Naive thymus-derived CD4-positive, alpha-beta T cell (primary cell): ENCODE measurements at regions of chr9 and their contacts with region 1.

Region 1: DNA sequence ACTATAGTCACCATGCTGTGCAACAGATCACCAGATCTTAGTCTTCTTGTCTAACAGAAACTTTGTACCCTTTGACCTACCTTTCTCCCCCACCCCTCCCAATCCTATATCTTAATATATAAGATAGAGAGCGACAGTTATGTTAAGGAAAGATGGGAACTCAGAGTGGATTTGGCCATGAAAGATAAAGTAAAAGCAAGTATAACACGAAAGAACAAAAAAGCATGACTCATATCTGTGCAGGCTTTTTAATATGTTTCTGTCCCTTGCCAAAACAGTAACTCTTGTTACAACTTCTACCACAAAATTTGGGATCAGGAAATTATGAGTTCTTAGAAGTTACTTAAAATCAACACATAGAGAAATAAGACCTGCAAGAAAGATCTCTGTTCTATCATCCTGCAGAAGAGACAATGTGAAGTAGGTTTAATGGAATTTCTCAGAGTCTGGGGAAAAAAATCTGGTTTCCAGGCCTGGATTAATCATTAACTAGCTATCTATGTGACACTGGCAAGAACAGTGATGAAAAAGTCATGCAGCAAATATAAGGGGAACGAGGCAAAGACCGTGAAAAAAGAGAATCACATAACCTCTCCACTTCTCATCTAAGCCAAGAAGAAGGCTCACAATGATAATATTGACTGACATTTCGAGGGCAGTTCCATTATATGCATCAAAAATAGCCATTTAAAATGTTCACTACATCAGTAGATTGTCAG is 18.6 kb downstream of the BAAT start:
- DNase-seq: no peak
- ATAC-seq: no peak
- H3K4me3 ChIP-seq: no peak overlapping the region
- H3K4me3 Mint-ChIP-seq: no peak overlapping the region
- H3K27ac ChIP-seq: no peak overlapping the region
- H3K27ac Mint-ChIP-seq: no peak overlapping the region
- H3K4me1 ChIP-seq: no peaks in the 10 kb centered on the region
- H3K4me1 Mint-ChIP-seq: no peaks in the 10 kb centered on the region
- H3K27me3 ChIP-seq: no peaks in the 10 kb centered on the region
- H3K27me3 Mint-ChIP-seq: peaks cover 0 to 9% (median 6%) of the 10 kb centered on the region in 5 donors

Region 2: GRCh38 chr9:101005248-101005647 is 360.9 kb before region 1 on chr9:
- CTCF ChIA-PET with region 1: no interaction called
- POLR2A ChIA-PET with region 1: no interaction called
- intact Hi-C with region 1: no loop called
- DNase-seq: no peak
- ATAC-seq: no peak
- H3K4me3 ChIP-seq: no peak overlapping the region
- H3K4me3 Mint-ChIP-seq: no peak overlapping the region
- H3K27ac ChIP-seq: no peak overlapping the region
- H3K27ac Mint-ChIP-seq: no peak overlapping the region
- H3K4me1 ChIP-seq: no peaks in the 10 kb centered on the region
- H3K4me1 Mint-ChIP-seq: no peaks in the 10 kb centered on the region
- H3K27me3 ChIP-seq: no peaks in the 10 kb centered on the region
- H3K27me3 Mint-ChIP-seq: no peaks in the 10 kb centered on the region

Region 3: GRCh38 chr9:101176384-101176783 is 189.8 kb before region 1 on chr9:
- CTCF ChIA-PET with region 1: no interaction called
- POLR2A ChIA-PET with region 1: no interaction called
- intact Hi-C with region 1: loop called in 1 of 2 experiments (anchors 5 kb)
- DNase-seq: no peak
- ATAC-seq: no peak
- H3K4me3 ChIP-seq: no peak overlapping the region
- H3K4me3 Mint-ChIP-seq: no peak overlapping the region
- H3K27ac ChIP-seq: no peak overlapping the region
- H3K27ac Mint-ChIP-seq: no peak overlapping the region
- H3K4me1 ChIP-seq: no peaks in the 10 kb centered on the region
- H3K4me1 Mint-ChIP-seq: no peaks in the 10 kb centered on the region
- H3K27me3 ChIP-seq: no peaks in the 10 kb centered on the region
- H3K27me3 Mint-ChIP-seq: peaks cover 0 to 9% (median 0%) of the 10 kb centered on the region in 5 donors

Region 4: DNA sequence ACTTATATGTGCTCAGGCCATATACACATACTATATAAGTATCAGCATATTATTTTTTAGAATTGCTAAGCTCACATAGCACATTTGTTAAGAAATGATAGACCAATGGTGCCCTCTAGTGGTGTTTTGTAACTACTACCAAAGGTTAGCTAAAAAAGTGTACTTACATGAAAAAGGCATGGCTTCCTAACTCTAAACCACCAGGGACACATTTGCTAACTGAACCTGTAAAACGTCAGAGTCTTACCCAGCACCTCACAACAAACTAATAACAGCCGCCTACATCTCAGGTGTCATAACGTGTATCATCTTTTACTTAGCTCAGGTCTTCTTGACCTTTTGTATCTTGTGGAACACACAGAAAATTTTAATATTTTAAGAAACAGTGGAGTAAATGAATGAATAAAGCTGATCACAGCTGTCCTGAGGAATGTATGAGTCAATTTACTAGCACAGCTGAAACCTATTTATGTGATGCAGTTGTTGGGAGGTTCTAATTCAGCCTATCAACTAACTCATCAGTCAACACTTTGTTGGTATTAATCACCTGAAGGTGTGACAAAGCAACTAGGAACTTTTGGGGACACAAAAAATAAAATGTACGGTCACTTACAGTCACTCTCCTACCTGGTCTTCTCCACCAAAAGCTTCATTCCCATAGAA is 54.3 kb before region 1 on chr9:
- CTCF ChIA-PET with region 1: no interaction called
- POLR2A ChIA-PET with region 1: no interaction called
- intact Hi-C with region 1: no loop called
- DNase-seq: peak in 7 of 9 donors; percentile 17 to 58 (median 54)
- ATAC-seq: peak; percentile 71
- H3K4me3 ChIP-seq: no peak overlapping the region
- H3K4me3 Mint-ChIP-seq: no peak overlapping the region
- H3K27ac ChIP-seq: no peak overlapping the region
- H3K27ac Mint-ChIP-seq: peak overlapping the region in 1 of 9 donors; percentile 39
- H3K4me1 ChIP-seq: no peaks in the 10 kb centered on the region
- H3K4me1 Mint-ChIP-seq: no peaks in the 10 kb centered on the region
- H3K27me3 ChIP-seq: no peaks in the 10 kb centered on the region
- H3K27me3 Mint-ChIP-seq: peaks cover 0 to 22% (median 7%) of the 10 kb centered on the region in 5 donors

Region 5: DNA sequence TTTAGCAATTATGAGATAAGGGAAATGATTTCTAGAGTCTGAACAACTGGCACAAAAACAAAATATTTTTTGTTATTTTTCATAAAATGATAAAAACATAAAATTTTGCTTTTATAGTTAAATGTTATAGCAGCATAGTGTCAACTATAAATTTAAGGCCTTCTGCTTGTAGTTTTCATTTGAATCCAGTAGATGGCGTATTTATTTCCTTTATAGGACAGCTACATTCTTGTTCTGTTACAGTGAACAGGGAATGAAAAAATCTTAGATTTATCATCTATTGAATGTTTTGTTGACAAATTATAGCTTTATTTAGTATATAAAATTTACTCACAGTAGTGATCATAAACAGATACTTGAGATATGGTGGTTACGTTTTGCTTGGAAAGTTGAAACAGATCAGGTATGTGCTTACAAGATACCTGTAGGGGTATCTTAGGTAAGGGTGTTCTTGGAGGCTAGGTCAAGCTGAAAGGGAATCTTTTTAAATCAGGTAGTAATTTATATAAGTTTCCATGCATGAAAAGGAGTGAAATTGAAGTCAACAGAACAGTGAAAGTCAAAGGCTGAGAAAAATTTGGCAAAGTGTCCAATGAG is 611.5 kb after region 1 on chr9:
- CTCF ChIA-PET with region 1: no interaction called
- POLR2A ChIA-PET with region 1: no interaction called
- intact Hi-C with region 1: loop called in 1 of 2 experiments (anchors 5 kb)
- DNase-seq: peak in 3 of 9 donors; percentile 2 to 5 (median 5)
- ATAC-seq: no peak
- H3K4me3 ChIP-seq: no peak overlapping the region
- H3K4me3 Mint-ChIP-seq: no peak overlapping the region
- H3K27ac ChIP-seq: no peak overlapping the region
- H3K27ac Mint-ChIP-seq: no peak overlapping the region
- H3K4me1 ChIP-seq: no peaks in the 10 kb centered on the region
- H3K4me1 Mint-ChIP-seq: no peaks in the 10 kb centered on the region
- H3K27me3 ChIP-seq: no peaks in the 10 kb centered on the region
- H3K27me3 Mint-ChIP-seq: no peaks in the 10 kb centered on the region